ENCODE measurements at regions of chr3 and their contacts with region 1.

Region 1: GRCh38 chr3:167882067-167882667 is 146.6 kb downstream of the SERPINI1 start:
- DNase-seq: peak; percentile 19
- H3K4me3 ChIP-seq: no peak overlapping the region
- H3K27ac ChIP-seq: no peak overlapping the region
- H3K4me1 ChIP-seq: no peaks in the 10 kb centered on the region
- H3K27me3 ChIP-seq: no peaks in the 10 kb centered on the region
- CTCF ChIP-seq: peak; percentile 49 to 64

Region 2: GRCh38 chr3:166498446-166498845 is 1383.7 kb before region 1 on chr3:
- CTCF ChIA-PET with region 1: no interaction called
- dilution Hi-C with region 1: no loop called
- in situ Hi-C with region 1: no loop called
- intact Hi-C with region 1: no loop called
- DNase-seq: no peak
- H3K4me3 ChIP-seq: no peak overlapping the region
- H3K27ac ChIP-seq: no peak overlapping the region
- H3K4me1 ChIP-seq: no peaks in the 10 kb centered on the region
- H3K27me3 ChIP-seq: no peaks in the 10 kb centered on the region
- CTCF ChIP-seq: no peak

Region 3: DNA sequence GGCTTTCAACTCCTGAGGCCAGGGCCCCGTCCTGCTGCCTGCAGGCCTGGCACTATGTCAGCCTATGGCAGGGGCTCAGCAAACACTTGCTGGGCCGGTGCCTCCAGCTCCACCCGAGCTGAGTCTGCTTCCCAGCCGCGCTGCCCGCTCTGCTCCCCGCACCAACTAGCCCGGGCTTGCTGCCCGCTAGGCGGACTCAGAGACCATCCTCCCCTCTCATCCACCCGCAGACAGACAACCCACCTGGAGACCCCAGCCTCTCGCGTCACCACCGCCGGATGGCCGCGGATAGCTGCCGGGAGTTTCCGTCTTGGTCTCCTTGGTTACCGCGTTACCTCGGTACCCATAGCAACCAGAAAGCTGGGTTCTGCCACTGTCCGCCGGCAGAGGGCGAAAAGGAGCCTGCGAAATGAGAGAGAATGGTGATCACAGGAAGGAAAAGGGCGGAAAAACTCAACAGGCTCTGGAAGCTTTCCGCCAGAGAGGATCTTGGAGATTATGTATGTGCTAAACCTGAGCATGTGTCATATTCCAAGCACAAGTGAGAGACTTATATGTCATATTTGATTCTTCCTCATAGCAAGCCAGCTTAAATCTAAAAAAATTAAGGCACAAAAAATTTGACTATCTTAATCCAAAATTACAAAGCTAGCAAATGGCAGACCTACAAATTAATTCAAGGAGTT is 502.0 kb before region 1 on chr3 and contains the start of gene ZBBX:
- CTCF ChIA-PET with region 1: interaction called, 14 read pairs
- dilution Hi-C with region 1: no loop called
- in situ Hi-C with region 1: no loop called
- intact Hi-C with region 1: loop called (anchors 1 kb)
- DNase-seq: peak; percentile 77
- H3K4me3 ChIP-seq: peak within 1 kb of the TSS; percentile 20 to 52 (median 51)
- H3K27ac ChIP-seq: no peak within 1 kb of the TSS
- H3K4me1 ChIP-seq: peaks cover 4% of the 10 kb centered on the region
- H3K27me3 ChIP-seq: no peaks in the 10 kb centered on the region
- CTCF ChIP-seq: peak; percentile 93 to 97
- total RNA-seq, gene ZBBX: not detected

Region 4: GRCh38 chr3:167734498-167735232 is 147.5 kb before region 1 on chr3 and contains the start of gene PDCD10:
- CTCF ChIA-PET with region 1: no interaction called
- dilution Hi-C with region 1: no loop called
- in situ Hi-C with region 1: no loop called
- intact Hi-C with region 1: loop called (anchors 5 kb)
- DNase-seq: peak; percentile 99
- H3K4me3 ChIP-seq: peak within 1 kb of the TSS; percentile 84 to 97 (median 89)
- H3K27ac ChIP-seq: peak within 1 kb of the TSS; percentile 79
- H3K4me1 ChIP-seq: no peaks in the 10 kb centered on the region
- H3K27me3 ChIP-seq: no peaks in the 10 kb centered on the region
- CTCF ChIP-seq: no peak
- total RNA-seq, gene PDCD10: 70.8 to 76.1 TPM

Region 5: GRCh38 chr3:167839460-167840134 is 42.6 kb before region 1 on chr3:
- CTCF ChIA-PET with region 1: no interaction called
- dilution Hi-C with region 1: no loop called
- in situ Hi-C with region 1: no loop called
- intact Hi-C with region 1: loop called (anchors 2 kb)
- DNase-seq: peak; percentile 39
- H3K4me3 ChIP-seq: no peak overlapping the region
- H3K27ac ChIP-seq: no peak overlapping the region
- H3K4me1 ChIP-seq: peaks cover 9% of the 10 kb centered on the region
- H3K27me3 ChIP-seq: no peaks in the 10 kb centered on the region
- CTCF ChIP-seq: no peak

Region 6: GRCh38 chr3:167861649-167862048 is 20.5 kb before region 1 on chr3:
- CTCF ChIA-PET with region 1: no interaction called
- dilution Hi-C with region 1: no loop called
- in situ Hi-C with region 1: no loop called
- intact Hi-C with region 1: no loop called
- DNase-seq: no peak
- H3K4me3 ChIP-seq: no peak overlapping the region
- H3K27ac ChIP-seq: no peak overlapping the region
- H3K4me1 ChIP-seq: no peaks in the 10 kb centered on the region
- H3K27me3 ChIP-seq: no peaks in the 10 kb centered on the region
- CTCF ChIP-seq: no peak